Heart left ventricle (tissue), 16 donors: ENCODE measurements at regions of chr14 and their contacts with region 1.

Region 1: GRCh38 chr14:92121670-92122350 is at the starts of genes CPSF2 and NDUFB1:
- DNase-seq: peak; percentile 88 to 91 (median 90)
- ATAC-seq: peak; percentile 91 to 95 (median 94)
- H3K4me3 ChIP-seq: peak within 1 kb of the TSS; percentile 59 to 97 (median 86)
- H3K27ac ChIP-seq: peak within 1 kb of the TSS; percentile 91 to 99 (median 96)
- H3K4me1 ChIP-seq: peaks cover 0 to 62% (median 33%) of the 10 kb centered on the region in 12 donors
- H3K27me3 ChIP-seq: no peaks in the 10 kb centered on the region
- CTCF ChIP-seq: peak in 1 of 12 donors; percentile 17
- POLR2A ChIP-seq: peak in 1 of 2 donors; percentile 57
- total RNA-seq, gene CPSF2: 24.5 to 51.7 (median 44.2) TPM
- total RNA-seq, gene NDUFB1: 295 to 1,551 (median 438) TPM

Region 2: GRCh38 chr14:91843437-91843836 is 278.4 kb before region 1 on chr14:
- intact Hi-C with region 1: no loop called
- DNase-seq: no peak
- ATAC-seq: no peak
- H3K4me3 ChIP-seq: no peak overlapping the region
- H3K27ac ChIP-seq: no peak overlapping the region
- H3K4me1 ChIP-seq: peaks cover 0 to 5% (median 0%) of the 10 kb centered on the region in 12 donors
- H3K27me3 ChIP-seq: peaks cover 0 to 21% (median 0%) of the 10 kb centered on the region in 9 donors
- CTCF ChIP-seq: no peak
- POLR2A ChIP-seq: no peak

Region 3: GRCh38 chr14:92093320-92093719 is 28.5 kb before region 1 on chr14:
- intact Hi-C with region 1: no loop called
- DNase-seq: no peak
- ATAC-seq: no peak
- H3K4me3 ChIP-seq: no peak overlapping the region
- H3K27ac ChIP-seq: no peak overlapping the region
- H3K4me1 ChIP-seq: no peaks in the 10 kb centered on the region
- H3K27me3 ChIP-seq: no peaks in the 10 kb centered on the region
- CTCF ChIP-seq: peak in 3 of 12 donors; percentile 8 to 17 (median 8)
- POLR2A ChIP-seq: no peak

Region 4: DNA sequence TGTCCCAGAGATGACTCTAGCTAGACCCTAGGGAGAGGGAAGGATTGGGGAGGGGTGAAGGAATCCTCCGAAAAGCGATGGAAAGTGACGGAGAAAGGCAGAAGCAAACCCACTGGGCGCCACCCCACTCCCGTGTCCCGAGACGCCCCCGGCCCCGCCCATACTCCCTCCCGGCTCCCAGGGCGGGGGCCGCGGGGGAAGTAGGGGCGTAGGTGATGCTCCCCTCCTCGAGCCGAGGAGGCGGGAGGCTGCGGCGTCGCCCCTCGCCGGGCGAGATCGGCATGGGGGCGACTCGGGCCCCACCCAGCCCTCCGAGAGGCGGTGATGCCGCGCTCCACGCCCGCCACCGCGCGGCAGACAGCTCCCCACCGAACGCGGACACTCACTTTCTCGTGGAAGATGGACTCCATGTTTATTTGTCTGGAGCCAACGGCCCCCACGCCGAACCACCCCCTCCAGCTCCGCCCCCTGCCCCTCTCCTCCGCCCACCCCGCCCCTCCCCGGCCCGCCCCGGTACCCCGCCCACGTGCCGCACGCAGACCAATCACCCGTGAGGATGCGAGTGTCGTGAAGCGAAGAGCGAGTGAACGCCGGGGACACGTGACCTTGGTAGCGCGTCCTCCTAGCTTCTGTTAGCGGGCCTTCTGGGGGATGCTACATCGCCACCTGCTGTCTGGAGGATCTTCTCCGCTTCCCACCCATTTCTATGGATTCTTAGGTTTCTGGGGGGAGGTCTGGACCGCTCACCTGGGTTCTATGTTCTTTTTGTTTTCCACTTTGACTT is 15.5 kb before region 1 on chr14 and contains the start of gene ATXN3:
- intact Hi-C with region 1: loop called in 3 of 10 experiments (anchors 1 to 2 kb)
- DNase-seq: peak; percentile 97 to 99 (median 98)
- ATAC-seq: peak; percentile 96 to 97 (median 96)
- H3K4me3 ChIP-seq: peak within 1 kb of the TSS; percentile 66 to 98 (median 90)
- H3K27ac ChIP-seq: peak within 1 kb of the TSS; percentile 89 to 100 (median 96)
- H3K4me1 ChIP-seq: peaks cover 0 to 38% (median 22%) of the 10 kb centered on the region in 12 donors
- H3K27me3 ChIP-seq: no peaks in the 10 kb centered on the region
- CTCF ChIP-seq: peak; percentile 58 to 90 (median 76)
- POLR2A ChIP-seq: peak in 1 of 2 donors; percentile 56
- total RNA-seq, gene ATXN3: 11.0 to 27.1 (median 16.3) TPM

Region 5: GRCh38 chr14:92154283-92154942 is 32.6 kb after region 1 on chr14:
- intact Hi-C with region 1: no loop called
- DNase-seq: no peak
- ATAC-seq: no peak
- H3K4me3 ChIP-seq: no peak overlapping the region
- H3K27ac ChIP-seq: no peak overlapping the region
- H3K4me1 ChIP-seq: no peaks in the 10 kb centered on the region
- H3K27me3 ChIP-seq: no peaks in the 10 kb centered on the region
- CTCF ChIP-seq: no peak
- POLR2A ChIP-seq: no peak

Region 6: DNA sequence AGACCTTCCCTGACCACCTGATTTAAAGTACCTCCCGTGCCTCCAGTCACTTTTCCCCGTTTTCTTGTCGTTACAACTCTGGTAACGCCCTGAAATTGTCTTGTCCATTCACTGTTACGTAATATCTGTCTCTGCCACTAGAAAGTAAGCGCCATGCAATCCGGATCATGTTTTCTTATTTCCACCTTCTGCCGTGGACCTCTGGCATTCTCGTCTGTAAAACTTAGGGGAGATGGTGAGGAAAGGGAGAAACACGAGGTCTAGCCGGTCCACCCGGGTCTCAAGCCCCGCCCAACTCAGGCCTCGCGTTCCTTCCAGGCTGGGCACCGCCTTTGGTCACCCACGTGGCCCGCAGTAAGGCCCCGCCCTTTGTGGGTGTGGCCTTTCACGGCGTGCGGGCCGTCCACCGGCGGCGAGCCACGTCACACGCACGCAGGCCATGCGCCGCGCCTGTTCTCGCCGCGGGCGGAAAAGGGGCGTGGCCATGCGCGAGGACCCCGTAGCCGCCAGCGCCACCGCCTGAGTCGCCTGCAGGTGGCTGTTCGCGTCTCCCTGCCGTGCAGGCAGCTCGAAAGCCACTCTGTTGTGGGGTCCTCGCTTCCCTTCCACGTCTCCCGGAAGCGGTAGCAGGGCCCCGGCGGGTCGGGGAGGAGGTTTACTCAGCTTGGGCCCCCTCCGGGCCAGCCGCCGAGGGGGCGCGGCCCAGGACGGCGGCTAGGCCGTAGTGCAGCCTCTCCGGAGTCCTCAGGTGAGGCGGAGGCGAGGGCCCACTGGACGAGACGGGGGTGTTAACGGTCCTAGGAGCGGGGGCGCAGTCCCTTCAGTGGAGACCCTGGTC is 672.1 kb after region 1 on chr14 and contains the start of gene GOLGA5:
- intact Hi-C with region 1: loop called in 1 of 10 experiments (anchors 5 kb)
- DNase-seq: peak; percentile 98 to 99 (median 98)
- ATAC-seq: peak; percentile 98 to 99 (median 98)
- H3K4me3 ChIP-seq: peak within 1 kb of the TSS; percentile 70 to 99 (median 96)
- H3K27ac ChIP-seq: peak within 1 kb of the TSS; percentile 53 to 96 (median 88)
- H3K4me1 ChIP-seq: peaks cover 0 to 33% (median 14%) of the 10 kb centered on the region in 12 donors
- H3K27me3 ChIP-seq: no peaks in the 10 kb centered on the region
- CTCF ChIP-seq: peak in 5 of 12 donors; percentile 5 to 28 (median 21)
- POLR2A ChIP-seq: peak in 1 of 2 donors; percentile 74
- total RNA-seq, gene GOLGA5: 18.1 to 25.9 (median 23.6) TPM